CD4-positive, alpha-beta T cell (primary cell): ENCODE measurements at regions of chr3 and their contacts with region 1.

Region 1: DNA sequence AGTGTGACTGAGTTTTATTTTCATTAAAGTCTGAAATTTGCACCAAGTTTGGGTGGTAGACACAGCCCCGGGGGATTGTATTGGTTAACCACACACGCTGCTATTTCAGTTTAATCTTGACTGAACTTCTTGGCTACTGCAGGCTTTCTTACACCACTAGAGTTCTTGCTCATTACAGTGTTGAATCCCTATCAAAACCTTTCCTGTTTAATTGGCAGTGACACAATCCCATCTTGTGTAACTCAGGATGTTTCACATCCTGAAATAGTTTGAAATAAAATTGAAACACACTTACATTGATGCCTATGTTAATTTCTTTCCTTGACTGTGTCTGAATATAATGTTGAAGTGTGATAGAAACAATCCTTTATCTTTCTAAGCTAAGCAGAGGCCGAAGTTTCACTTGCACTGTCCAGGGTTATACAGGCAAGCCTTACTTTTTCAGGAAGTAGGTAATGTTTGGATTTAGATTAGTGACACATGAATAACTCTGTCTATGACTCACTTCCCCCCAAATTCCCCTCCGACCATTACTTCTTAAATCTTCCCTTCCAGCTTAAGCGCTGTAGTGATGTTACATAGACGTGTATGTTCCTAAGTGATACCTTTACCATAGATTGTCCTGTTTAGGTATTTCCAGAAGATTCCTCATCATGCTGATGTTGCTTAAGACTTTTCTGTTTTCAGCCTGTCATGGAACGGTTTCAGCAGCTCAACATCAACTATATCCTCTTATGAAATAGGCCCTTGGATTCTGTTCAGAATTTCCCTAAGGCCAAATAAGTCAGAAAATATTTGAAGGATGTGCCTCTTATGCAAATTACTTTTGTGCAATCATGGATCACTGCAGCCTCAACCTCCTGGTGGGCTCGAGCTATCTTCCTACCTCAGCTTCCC is 16.8 kb downstream of the ATG7 start:
- DNase-seq: peak in 3 of 14 experiments; percentile 45 to 75 (median 69)
- ATAC-seq: peak; percentile 12
- H3K4me3 ChIP-seq: no peak overlapping the region
- H3K4me3 Mint-ChIP-seq: peak overlapping the region; percentile 12
- H3K27ac ChIP-seq: peak overlapping the region in 1 of 2 donors; percentile 38
- H3K27ac Mint-ChIP-seq: peak overlapping the region; percentile 88
- H3K4me1 ChIP-seq: peaks cover 35% of the 10 kb centered on the region
- H3K4me1 Mint-ChIP-seq: peaks cover 64% of the 10 kb centered on the region
- H3K27me3 ChIP-seq: no peaks in the 10 kb centered on the region
- H3K27me3 Mint-ChIP-seq: no peaks in the 10 kb centered on the region
- CTCF ChIP-seq: no peak

Region 2: GRCh38 chr3:11236595-11237461 is 52.2 kb before region 1 on chr3:
- CTCF ChIA-PET with region 1: no interaction called
- POLR2A ChIA-PET with region 1: no interaction called
- intact Hi-C with region 1: loop called in 1 of 2 experiments (anchors 2 kb)
- DNase-seq: peak; percentile 68 to 87 (median 74)
- ATAC-seq: peak; percentile 66
- H3K4me3 ChIP-seq: no peak overlapping the region
- H3K4me3 Mint-ChIP-seq: no peak overlapping the region
- H3K27ac ChIP-seq: no peak overlapping the region
- H3K27ac Mint-ChIP-seq: no peak overlapping the region
- H3K4me1 ChIP-seq: no peaks in the 10 kb centered on the region
- H3K4me1 Mint-ChIP-seq: no peaks in the 10 kb centered on the region
- H3K27me3 ChIP-seq: peaks cover 0 to 7% of the 10 kb centered on the region in 2 experiments
- H3K27me3 Mint-ChIP-seq: peaks cover 8% of the 10 kb centered on the region
- CTCF ChIP-seq: peak; percentile 89